CD14-positive monocyte (primary cell): ENCODE measurements at regions of chr13 and their contacts with region 1.

Region 1: DNA sequence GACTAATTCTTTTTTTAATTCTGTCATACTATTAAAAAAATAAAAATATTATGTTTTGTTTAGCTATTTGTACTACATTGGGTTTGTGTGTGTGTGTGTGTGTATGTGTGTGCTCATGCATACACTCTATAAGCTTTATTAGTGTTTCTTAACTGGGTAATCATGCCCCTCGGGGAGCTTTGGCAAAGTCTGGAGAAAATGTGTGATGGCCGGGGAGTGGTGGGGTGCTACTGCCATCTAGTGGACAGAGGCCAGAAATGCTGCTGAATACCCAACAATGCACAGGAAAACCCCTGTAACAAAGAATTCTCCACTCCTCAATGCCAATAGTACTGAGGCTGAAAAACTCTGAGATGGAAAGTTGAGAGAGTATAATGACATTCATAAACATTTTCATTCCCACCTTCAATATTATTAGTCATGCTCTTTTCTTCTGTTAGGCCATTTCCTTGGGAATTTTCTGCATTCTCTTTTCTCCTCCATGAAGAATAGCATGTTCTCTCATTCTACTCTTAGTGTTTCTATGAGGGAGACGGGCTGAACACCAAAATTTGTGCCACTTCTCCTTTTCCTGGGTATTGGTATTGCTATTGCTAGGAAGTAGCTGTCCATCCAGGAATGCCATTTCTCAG is 157.3 kb downstream of the DNAJC3 start:
- DNase-seq: peak; percentile 47 to 66 (median 60)
- H3K4me3 ChIP-seq: no peak overlapping the region
- H3K4me3 Mint-ChIP-seq: no peak overlapping the region
- H3K27ac ChIP-seq: no peak overlapping the region
- H3K27ac Mint-ChIP-seq: no peak overlapping the region
- H3K4me1 ChIP-seq: peaks cover 0 to 2% of the 10 kb centered on the region in 2 donors
- H3K4me1 Mint-ChIP-seq: peaks cover 5% of the 10 kb centered on the region
- H3K27me3 ChIP-seq: no peaks in the 10 kb centered on the region
- H3K27me3 Mint-ChIP-seq: peaks cover 0 to 3% (median 0%) of the 10 kb centered on the region in 3 donors
- CTCF ChIP-seq: peak; percentile 84

Region 2: GRCh38 chr13:95191821-95192563 is 642.3 kb before region 1 on chr13:
- intact Hi-C with region 1: loop called in 1 of 2 experiments (anchors 10 kb)
- DNase-seq: peak; percentile 53 to 61 (median 56)
- H3K4me3 ChIP-seq: no peak overlapping the region
- H3K4me3 Mint-ChIP-seq: no peak overlapping the region
- H3K27ac ChIP-seq: no peak overlapping the region
- H3K27ac Mint-ChIP-seq: no peak overlapping the region
- H3K4me1 ChIP-seq: no peaks in the 10 kb centered on the region
- H3K4me1 Mint-ChIP-seq: peaks cover 3% of the 10 kb centered on the region
- H3K27me3 ChIP-seq: no peaks in the 10 kb centered on the region
- H3K27me3 Mint-ChIP-seq: peaks cover 0 to 1% (median 1%) of the 10 kb centered on the region in 3 donors
- CTCF ChIP-seq: peak; percentile 81

Region 3: GRCh38 chr13:95479731-95480130 is 354.5 kb before region 1 on chr13:
- intact Hi-C with region 1: loop called in 1 of 2 experiments (anchors 10 kb)
- DNase-seq: peak; percentile 23 to 61 (median 48)
- H3K4me3 ChIP-seq: peak overlapping the region in 2 of 3 experiments; percentile 7 to 61
- H3K4me3 Mint-ChIP-seq: peak overlapping the region; percentile 56 to 76
- H3K27ac ChIP-seq: peak overlapping the region; percentile 26 to 79
- H3K27ac Mint-ChIP-seq: peak overlapping the region; percentile 94 to 98 (median 97)
- H3K4me1 ChIP-seq: peaks cover 29 to 30% of the 10 kb centered on the region in 2 donors
- H3K4me1 Mint-ChIP-seq: peaks cover 28% of the 10 kb centered on the region
- H3K27me3 ChIP-seq: no peaks in the 10 kb centered on the region
- H3K27me3 Mint-ChIP-seq: peaks cover 0 to 2% (median 0%) of the 10 kb centered on the region in 3 donors
- CTCF ChIP-seq: no peak

Region 4: GRCh38 chr13:95536632-95537241 is 297.5 kb before region 1 on chr13:
- intact Hi-C with region 1: loop called (anchors 5 to 10 kb)
- DNase-seq: peak in 1 of 3 donors; percentile 42
- H3K4me3 ChIP-seq: no peak overlapping the region
- H3K4me3 Mint-ChIP-seq: no peak overlapping the region
- H3K27ac ChIP-seq: no peak overlapping the region
- H3K27ac Mint-ChIP-seq: no peak overlapping the region
- H3K4me1 ChIP-seq: peaks cover 7 to 10% of the 10 kb centered on the region in 2 donors
- H3K4me1 Mint-ChIP-seq: peaks cover 12% of the 10 kb centered on the region
- H3K27me3 ChIP-seq: no peaks in the 10 kb centered on the region
- H3K27me3 Mint-ChIP-seq: peaks cover 0 to 3% (median 0%) of the 10 kb centered on the region in 3 donors
- CTCF ChIP-seq: peak; percentile 72

Region 5: GRCh38 chr13:95624020-95624419 is 210.2 kb before region 1 on chr13:
- intact Hi-C with region 1: loop called (anchors 5 kb)
- DNase-seq: peak; percentile 45 to 57 (median 45)
- H3K4me3 ChIP-seq: no peak overlapping the region
- H3K4me3 Mint-ChIP-seq: no peak overlapping the region
- H3K27ac ChIP-seq: no peak overlapping the region
- H3K27ac Mint-ChIP-seq: no peak overlapping the region
- H3K4me1 ChIP-seq: peaks cover 10 to 11% of the 10 kb centered on the region in 2 donors
- H3K4me1 Mint-ChIP-seq: peaks cover 14% of the 10 kb centered on the region
- H3K27me3 ChIP-seq: no peaks in the 10 kb centered on the region
- H3K27me3 Mint-ChIP-seq: peaks cover 0 to 2% (median 0%) of the 10 kb centered on the region in 3 donors
- CTCF ChIP-seq: peak; percentile 80

Region 6: GRCh38 chr13:96034662-96035061 is 200.4 kb after region 1 on chr13:
- intact Hi-C with region 1: no loop called
- DNase-seq: no peak
- H3K4me3 ChIP-seq: no peak overlapping the region
- H3K4me3 Mint-ChIP-seq: no peak overlapping the region
- H3K27ac ChIP-seq: no peak overlapping the region
- H3K27ac Mint-ChIP-seq: no peak overlapping the region
- H3K4me1 ChIP-seq: no peaks in the 10 kb centered on the region
- H3K4me1 Mint-ChIP-seq: peaks cover 2% of the 10 kb centered on the region
- H3K27me3 ChIP-seq: no peaks in the 10 kb centered on the region
- H3K27me3 Mint-ChIP-seq: peaks cover 0 to 1% (median 0%) of the 10 kb centered on the region in 3 donors
- CTCF ChIP-seq: no peak

Region 7: GRCh38 chr13:96621634-96622183 is 787.5 kb after region 1 on chr13:
- intact Hi-C with region 1: no loop called
- DNase-seq: no peak
- H3K4me3 ChIP-seq: no peak overlapping the region
- H3K4me3 Mint-ChIP-seq: no peak overlapping the region
- H3K27ac ChIP-seq: no peak overlapping the region
- H3K27ac Mint-ChIP-seq: no peak overlapping the region
- H3K4me1 ChIP-seq: no peaks in the 10 kb centered on the region
- H3K4me1 Mint-ChIP-seq: no peaks in the 10 kb centered on the region
- H3K27me3 ChIP-seq: no peaks in the 10 kb centered on the region
- H3K27me3 Mint-ChIP-seq: peaks cover 0 to 2% (median 1%) of the 10 kb centered on the region in 3 donors
- CTCF ChIP-seq: no peak